ENCODE measurements at regions of chr22 and their contacts with region 1.

Region 1: GRCh38 chr22:29603358-29604075 is at the start of gene NF2:
- DNase-seq: peak; percentile 95
- H3K4me3 ChIP-seq: peak within 1 kb of the TSS; percentile 76
- CTCF ChIP-seq: no peak

Region 2: DNA sequence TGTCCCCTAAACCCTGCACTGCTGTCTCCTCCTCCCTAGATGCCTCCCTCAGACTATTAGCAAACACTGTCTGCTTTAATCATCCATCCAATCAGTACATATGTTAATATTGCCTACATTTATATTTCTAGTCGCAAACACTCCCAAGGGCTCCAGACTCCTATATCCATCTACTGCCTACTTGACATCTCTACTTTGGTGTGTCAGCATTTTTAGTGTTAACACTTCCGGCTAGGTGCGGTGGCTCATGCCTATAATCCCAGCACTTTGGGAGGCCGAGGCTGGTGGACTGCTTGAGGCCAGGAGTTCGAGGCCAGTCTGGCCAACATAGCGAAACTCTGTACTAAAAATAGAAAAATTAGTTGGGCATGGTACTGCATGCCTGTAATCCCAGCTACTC is 44.5 kb before region 1 on chr22:
- CTCF ChIA-PET with region 1: no interaction called
- POLR2A ChIA-PET with region 1: no interaction called
- DNase-seq: no peak
- H3K4me3 ChIP-seq: no peak overlapping the region
- CTCF ChIP-seq: no peak

Region 3: DNA sequence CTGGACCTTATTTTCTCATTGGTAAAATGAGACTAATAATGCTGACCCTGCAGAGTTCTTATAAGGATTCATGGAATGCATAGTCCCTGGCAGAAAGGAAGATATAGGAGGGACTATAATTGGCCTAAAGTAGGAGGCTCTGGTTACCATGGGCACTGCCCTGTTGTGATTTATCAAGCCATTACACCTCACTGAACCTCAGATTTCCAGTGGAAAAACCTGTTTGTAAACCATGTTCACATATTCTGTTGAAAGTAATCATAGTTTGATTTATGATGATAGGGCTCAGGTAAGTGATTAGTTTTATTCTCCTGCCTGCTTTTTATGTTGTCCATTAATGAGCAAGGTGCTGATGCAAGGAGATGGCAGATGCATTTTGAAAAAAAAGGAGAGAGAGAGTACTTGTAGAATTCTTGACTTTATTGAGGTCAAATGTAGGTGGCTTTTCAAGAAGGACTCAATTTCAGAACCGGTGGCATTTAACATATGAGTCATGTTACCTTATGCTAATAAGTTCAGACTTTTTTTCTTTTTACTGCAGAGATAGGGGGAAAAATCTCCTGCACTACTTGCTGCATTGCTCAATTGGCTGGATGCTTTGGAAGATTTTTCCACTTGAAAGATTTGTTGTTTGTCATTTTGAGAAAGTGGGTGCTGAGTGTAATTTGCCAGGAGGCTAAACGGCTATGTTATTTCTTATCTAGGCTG is 14.6 kb after region 1 on chr22:
- CTCF ChIA-PET with region 1: interaction called, 14 read pairs
- POLR2A ChIA-PET with region 1: interaction called, 5 read pairs
- DNase-seq: no peak
- H3K4me3 ChIP-seq: no peak overlapping the region
- CTCF ChIP-seq: no peak

Region 4: GRCh38 chr22:29625090-29625825 is 21.7 kb after region 1 on chr22:
- CTCF ChIA-PET with region 1: interaction called, 36 read pairs
- POLR2A ChIA-PET with region 1: interaction called, 6 read pairs
- DNase-seq: no peak
- H3K4me3 ChIP-seq: no peak overlapping the region
- CTCF ChIP-seq: peak; percentile 63